Testis (tissue), 5 donors: ENCODE measurements at regions of chr3 and their contacts with region 1.

Region 1: DNA sequence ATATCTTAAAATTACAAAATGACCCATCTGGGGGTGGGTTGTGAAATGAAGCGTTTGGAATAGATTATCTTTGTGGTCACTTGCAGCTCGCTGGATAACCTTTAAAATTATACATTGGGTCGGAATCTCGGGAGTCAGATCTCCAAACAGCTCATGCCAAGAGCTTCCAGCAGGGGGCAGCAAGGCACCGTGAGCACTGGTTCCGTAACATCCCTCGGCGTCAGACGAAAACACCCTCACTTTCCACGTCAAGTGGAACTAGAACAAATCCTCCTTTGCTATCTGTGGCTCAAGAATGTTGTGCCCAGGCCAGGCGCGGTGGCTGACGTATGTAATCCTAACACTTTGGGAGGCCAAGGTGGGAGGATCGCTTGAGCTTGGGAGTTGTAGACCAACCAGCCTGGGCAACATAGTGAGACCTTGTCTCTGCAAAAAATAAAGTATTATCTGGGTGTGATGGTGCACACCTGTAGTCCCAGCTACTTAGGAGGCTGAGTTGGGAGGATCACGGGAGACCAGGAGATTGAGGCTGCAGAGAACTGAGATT is 31.1 kb downstream of the UMPS start:
- DNase-seq: peak; percentile 94
- H3K4me3 ChIP-seq: no peak overlapping the region
- H3K27ac ChIP-seq: no peak overlapping the region
- H3K4me1 ChIP-seq: peaks cover 5% of the 10 kb centered on the region
- H3K27me3 ChIP-seq: no peaks in the 10 kb centered on the region
- CTCF ChIP-seq: peak; percentile 96 to 98 (median 97)
- POLR2A ChIP-seq: no peak

Region 2: GRCh38 chr3:124650798-124651197 is 110.5 kb before region 1 on chr3:
- intact Hi-C with region 1: no loop called
- DNase-seq: no peak
- H3K4me3 ChIP-seq: no peak overlapping the region
- H3K27ac ChIP-seq: no peak overlapping the region
- H3K4me1 ChIP-seq: no peaks in the 10 kb centered on the region
- H3K27me3 ChIP-seq: no peaks in the 10 kb centered on the region
- CTCF ChIP-seq: no peak
- POLR2A ChIP-seq: no peak

Region 3: DNA sequence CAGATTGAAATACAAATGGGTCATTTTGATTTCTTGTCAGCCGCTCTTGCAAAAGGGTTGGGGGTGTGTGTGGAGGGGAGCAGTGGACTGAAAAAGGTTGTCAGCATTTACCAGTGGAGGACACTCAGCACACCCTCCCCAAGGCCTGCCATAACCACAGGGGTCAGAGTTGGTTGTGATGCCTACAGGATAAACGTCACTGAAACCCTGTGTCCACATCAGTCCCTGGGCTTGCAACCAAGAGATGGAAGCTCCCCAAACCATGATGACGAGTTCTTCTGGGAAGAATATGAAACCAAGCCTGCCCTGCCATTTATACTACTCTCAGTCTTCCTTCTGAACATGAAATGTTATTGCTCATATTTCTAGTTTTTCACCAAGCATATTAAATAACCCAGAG is 85.1 kb before region 1 on chr3:
- intact Hi-C with region 1: no loop called
- DNase-seq: no peak
- H3K4me3 ChIP-seq: no peak overlapping the region
- H3K27ac ChIP-seq: no peak overlapping the region
- H3K4me1 ChIP-seq: no peaks in the 10 kb centered on the region
- H3K27me3 ChIP-seq: no peaks in the 10 kb centered on the region
- CTCF ChIP-seq: no peak
- POLR2A ChIP-seq: no peak

Region 4: GRCh38 chr3:124903907-124904834 is 142.8 kb after region 1 on chr3:
- intact Hi-C with region 1: loop called (anchors 5 kb)
- DNase-seq: no peak
- H3K4me3 ChIP-seq: no peak overlapping the region
- H3K27ac ChIP-seq: no peak overlapping the region
- H3K4me1 ChIP-seq: no peaks in the 10 kb centered on the region
- H3K27me3 ChIP-seq: no peaks in the 10 kb centered on the region
- CTCF ChIP-seq: no peak
- POLR2A ChIP-seq: no peak

Region 5: GRCh38 chr3:125437631-125438435 is 676.5 kb after region 1 on chr3:
- intact Hi-C with region 1: loop called (anchors 10 kb)
- DNase-seq: peak; percentile 74
- H3K4me3 ChIP-seq: no peak overlapping the region
- H3K27ac ChIP-seq: no peak overlapping the region
- H3K4me1 ChIP-seq: no peaks in the 10 kb centered on the region
- H3K27me3 ChIP-seq: no peaks in the 10 kb centered on the region
- CTCF ChIP-seq: peak; percentile 86 to 98 (median 92)
- POLR2A ChIP-seq: no peak